AG04449 (cell line): ENCODE measurements at regions of chr3 and their contacts with region 1.

Region 1: DNA sequence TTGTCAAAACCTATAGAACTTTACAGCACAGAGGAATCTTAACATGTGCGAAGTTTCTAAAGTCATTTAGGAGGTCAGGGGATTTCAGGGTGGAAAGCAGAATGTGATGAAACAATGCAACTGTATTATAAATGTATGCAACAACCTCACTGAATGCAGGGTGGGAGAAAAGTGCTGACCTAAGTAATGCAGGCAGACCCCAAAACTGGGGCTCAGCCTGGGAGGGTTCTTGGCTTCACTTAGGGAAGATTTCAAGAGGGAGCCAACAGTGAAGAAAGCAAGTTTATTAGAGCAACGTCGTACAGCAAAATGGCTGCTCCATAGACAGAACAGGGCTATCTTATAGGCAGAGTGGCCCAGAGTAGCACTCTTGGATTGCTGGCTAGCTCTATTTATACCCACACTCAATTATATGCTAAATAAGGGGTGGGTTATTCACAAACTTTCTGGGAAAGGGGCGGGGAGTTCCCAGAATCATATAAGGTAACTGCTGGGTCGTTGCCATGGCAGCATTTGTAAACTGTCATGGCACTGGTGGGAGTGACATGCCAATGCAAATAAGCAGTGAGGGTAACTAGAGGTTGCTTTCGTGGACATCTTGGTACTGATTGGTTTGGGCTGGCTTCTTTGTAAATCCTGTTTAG is 14.2 kb upstream of the CAND2 start:
- DNase-seq: no peak
- H3K4me3 ChIP-seq: no peak overlapping the region
- CTCF ChIP-seq: no peak

Region 2: GRCh38 chr3:12766541-12766940 is 15.8 kb before region 1 on chr3:
- CTCF ChIA-PET with region 1: interaction called, 23 read pairs
- POLR2A ChIA-PET with region 1: no interaction called
- DNase-seq: no peak
- H3K4me3 ChIP-seq: no peak overlapping the region
- CTCF ChIP-seq: no peak

Region 3: GRCh38 chr3:12796171-12797123 is 14.2 kb after region 1 on chr3 and contains the start of gene CAND2:
- CTCF ChIA-PET with region 1: interaction called, 39 read pairs
- POLR2A ChIA-PET with region 1: no interaction called
- DNase-seq: no peak
- H3K4me3 ChIP-seq: peak within 1 kb of the TSS; percentile 69
- CTCF ChIP-seq: no peak